ENCODE measurements at regions of chr3 and their contacts with region 1.

Region 1: GRCh38 chr3:99866261-99866761 is 48.6 kb downstream of the CMSS1 start:
- DNase-seq: no peak
- H3K4me3 ChIP-seq: no peak overlapping the region
- H3K27ac ChIP-seq: peak overlapping the region; percentile 80
- H3K4me1 ChIP-seq: peaks cover 57% of the 10 kb centered on the region
- H3K27me3 ChIP-seq: no peaks in the 10 kb centered on the region
- CTCF ChIP-seq: no peak
- POLR2A ChIP-seq: no peak

Region 2: GRCh38 chr3:99731499-99731898 is 134.8 kb before region 1 on chr3:
- CTCF ChIA-PET with region 1: no interaction called
- POLR2A ChIA-PET with region 1: no interaction called
- dilution Hi-C with region 1: no loop called
- intact Hi-C with region 1: no loop called
- DNase-seq: no peak
- H3K4me3 ChIP-seq: no peak overlapping the region
- H3K27ac ChIP-seq: no peak overlapping the region
- H3K4me1 ChIP-seq: no peaks in the 10 kb centered on the region
- H3K27me3 ChIP-seq: no peaks in the 10 kb centered on the region
- CTCF ChIP-seq: no peak
- POLR2A ChIP-seq: no peak

Region 3: DNA sequence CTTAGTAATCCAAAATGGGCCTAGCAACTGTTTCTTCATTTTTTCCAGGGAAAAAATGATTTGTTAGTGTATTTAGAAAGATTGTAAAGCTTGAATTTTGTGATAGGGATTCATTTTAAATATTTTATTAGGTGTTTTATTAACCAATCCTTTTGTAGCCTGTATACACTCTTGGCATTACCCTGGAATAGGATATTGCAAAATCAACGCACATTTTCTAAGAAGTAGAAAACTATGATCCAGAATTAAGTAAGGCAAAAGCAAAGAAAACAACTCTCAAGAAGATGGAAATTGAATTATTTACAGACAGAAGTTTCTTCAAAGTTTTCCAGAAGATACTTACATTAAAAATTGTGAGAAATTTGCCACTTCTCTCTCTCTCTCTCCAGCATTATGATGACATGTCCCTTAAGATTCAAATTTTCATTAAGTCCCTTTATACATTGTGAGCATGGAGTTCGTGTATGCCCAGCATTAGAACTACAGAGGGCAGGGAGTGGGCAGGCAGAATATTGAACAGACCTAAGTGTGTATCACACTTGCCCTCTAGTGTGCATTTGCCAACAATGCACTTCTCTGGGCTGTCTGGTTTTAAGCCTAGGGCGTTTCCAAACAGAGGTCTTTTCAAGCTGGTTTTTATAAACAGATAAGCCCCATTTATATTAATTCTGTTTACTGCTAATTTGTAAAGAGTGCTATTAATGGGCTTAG is 77.1 kb before region 1 on chr3:
- CTCF ChIA-PET with region 1: no interaction called
- POLR2A ChIA-PET with region 1: no interaction called
- dilution Hi-C with region 1: no loop called
- intact Hi-C with region 1: no loop called
- DNase-seq: peak; percentile 68
- H3K4me3 ChIP-seq: no peak overlapping the region
- H3K27ac ChIP-seq: no peak overlapping the region
- H3K4me1 ChIP-seq: no peaks in the 10 kb centered on the region
- H3K27me3 ChIP-seq: no peaks in the 10 kb centered on the region
- CTCF ChIP-seq: peak; percentile 52 to 58
- POLR2A ChIP-seq: no peak

Region 4: DNA sequence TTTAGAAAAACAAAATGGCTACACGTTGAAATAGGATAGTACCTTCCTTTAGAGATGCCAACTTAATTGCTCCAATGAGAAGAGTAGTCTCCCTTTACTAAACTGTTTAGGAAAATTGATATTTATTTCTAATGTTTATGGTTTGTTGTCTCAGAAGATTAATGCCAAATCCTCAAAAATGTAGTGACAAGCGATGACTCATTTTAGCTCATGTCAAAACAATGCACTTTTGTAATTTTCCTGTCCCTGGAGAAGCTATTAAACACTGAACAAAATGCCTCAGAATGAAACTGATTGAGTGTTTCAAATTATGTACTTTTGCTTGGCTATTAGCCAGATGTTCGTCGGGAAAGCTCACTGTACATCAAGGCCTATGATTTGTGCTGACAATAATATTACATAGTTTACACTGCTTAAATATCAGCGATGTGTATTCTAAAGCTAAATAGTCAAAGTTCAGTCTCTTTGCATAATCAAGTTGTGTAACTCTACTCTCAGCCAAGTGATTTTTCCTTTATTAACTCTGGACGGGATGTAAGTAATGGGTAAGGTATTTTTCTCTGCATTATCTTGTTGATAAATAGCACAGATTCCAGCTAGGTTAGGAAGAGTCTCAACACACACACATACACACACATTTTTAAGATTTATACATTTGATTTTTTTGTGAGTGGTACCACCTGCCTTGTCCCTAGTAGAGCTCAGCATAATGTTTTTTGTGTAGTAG is 35.1 kb after region 1 on chr3:
- CTCF ChIA-PET with region 1: no interaction called
- POLR2A ChIA-PET with region 1: no interaction called
- dilution Hi-C with region 1: no loop called
- intact Hi-C with region 1: loop called (anchors 1 kb)
- DNase-seq: peak; percentile 92
- H3K4me3 ChIP-seq: peak overlapping the region in 1 of 3 experiments; percentile 24
- H3K27ac ChIP-seq: peak overlapping the region; percentile 94
- H3K4me1 ChIP-seq: peaks cover 34% of the 10 kb centered on the region
- H3K27me3 ChIP-seq: no peaks in the 10 kb centered on the region
- CTCF ChIP-seq: no peak
- POLR2A ChIP-seq: no peak

Region 5: GRCh38 chr3:100006570-100007271 is 140.4 kb after region 1 on chr3:
- CTCF ChIA-PET with region 1: interaction called, 4 read pairs
- POLR2A ChIA-PET with region 1: no interaction called
- dilution Hi-C with region 1: no loop called
- intact Hi-C with region 1: loop called (anchors 1 kb)
- DNase-seq: peak; percentile 72
- H3K4me3 ChIP-seq: no peak overlapping the region
- H3K27ac ChIP-seq: no peak overlapping the region
- H3K4me1 ChIP-seq: peaks cover 73% of the 10 kb centered on the region
- H3K27me3 ChIP-seq: no peaks in the 10 kb centered on the region
- CTCF ChIP-seq: no peak
- POLR2A ChIP-seq: no peak

Measured in endothelial cell of umbilical vein (primary cell).